AG04450 (cell line): ENCODE measurements at regions of chr14 and their contacts with region 1.

Region 1: DNA sequence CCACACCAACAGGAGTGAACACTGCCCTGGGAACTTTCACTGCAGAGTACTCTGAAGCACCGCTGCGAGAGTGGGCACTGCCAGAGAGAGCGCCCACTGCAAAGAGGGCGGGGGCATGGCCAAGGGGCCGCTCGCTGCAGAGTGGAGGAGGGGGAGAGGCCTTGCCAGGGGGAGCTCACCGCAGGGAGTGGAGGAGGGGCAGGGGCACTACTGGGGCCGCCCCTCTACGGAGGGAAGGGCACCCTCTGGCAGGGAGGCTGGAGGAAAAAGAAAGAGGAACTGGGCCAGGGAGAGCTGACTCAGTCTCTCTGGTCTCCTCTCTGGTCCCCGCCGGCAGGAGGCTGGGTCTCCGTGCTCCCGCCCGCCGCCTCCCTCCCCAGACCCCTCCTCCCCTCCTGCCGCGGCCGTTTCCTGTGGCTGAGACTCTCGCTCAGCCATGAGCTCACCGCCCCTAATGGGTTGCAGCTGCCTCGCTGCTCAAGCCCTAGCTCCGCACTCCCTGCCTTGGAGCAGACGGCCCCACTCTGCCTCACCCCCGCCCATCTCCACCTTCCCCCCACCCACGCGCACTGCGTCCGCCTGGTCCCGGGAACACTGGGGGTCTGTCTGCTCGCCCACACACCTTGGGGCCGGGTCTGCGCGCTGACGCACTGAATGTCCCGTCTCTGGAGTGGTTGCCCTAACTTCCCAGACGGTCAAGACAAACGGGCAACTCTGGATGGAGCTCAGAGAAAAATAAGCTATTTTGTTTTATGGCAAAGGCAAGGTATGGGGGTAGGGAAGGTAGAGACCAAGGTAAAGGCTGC is 1.3 kb downstream of the ARHGEF40 start:
- DNase-seq: peak; percentile 88
- H3K4me3 ChIP-seq: peak overlapping the region; percentile 82
- H3K27ac ChIP-seq: peak overlapping the region; percentile 95
- H3K27me3 ChIP-seq: no peaks in the 10 kb centered on the region
- CTCF ChIP-seq: no peak

Region 2: DNA sequence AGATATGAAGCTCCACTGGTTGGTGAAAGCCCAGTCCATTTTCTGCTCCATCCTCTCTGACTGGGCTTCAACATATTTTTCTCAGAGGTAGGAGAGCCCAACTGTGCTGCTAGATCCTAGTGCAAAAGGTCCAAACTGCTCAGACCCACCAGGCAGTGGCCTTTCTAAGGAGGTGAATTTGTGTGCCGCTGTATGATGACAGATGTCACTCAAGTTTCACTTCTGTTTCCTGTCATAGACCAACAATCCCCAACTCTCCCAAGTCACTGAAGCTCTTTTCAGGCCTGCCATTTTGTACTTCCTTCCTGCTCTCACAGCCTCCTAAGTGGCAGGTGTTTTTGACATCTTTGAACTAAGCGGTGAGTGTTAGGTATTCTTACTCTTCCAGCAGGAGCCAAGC is 403.5 kb before region 1 on chr14:
- CTCF ChIA-PET with region 1: no interaction called
- POLR2A ChIA-PET with region 1: no interaction called
- DNase-seq: no peak
- H3K4me3 ChIP-seq: no peak overlapping the region
- H3K27ac ChIP-seq: no peak overlapping the region
- H3K27me3 ChIP-seq: peaks cover 8% of the 10 kb centered on the region
- CTCF ChIP-seq: no peak

Region 3: GRCh38 chr14:21039585-21040369 is 31.7 kb before region 1 on chr14:
- CTCF ChIA-PET with region 1: interaction called, 10 read pairs
- POLR2A ChIA-PET with region 1: interaction called, 3 read pairs
- DNase-seq: peak; percentile 26
- H3K4me3 ChIP-seq: no peak overlapping the region
- H3K27ac ChIP-seq: no peak overlapping the region
- H3K27me3 ChIP-seq: peaks cover 28% of the 10 kb centered on the region
- CTCF ChIP-seq: peak; percentile 71

Region 4: GRCh38 chr14:21049271-21049673 is 22.2 kb before region 1 on chr14:
- CTCF ChIA-PET with region 1: interaction called, 6 read pairs
- POLR2A ChIA-PET with region 1: interaction called, 16 read pairs
- DNase-seq: no peak
- H3K4me3 ChIP-seq: no peak overlapping the region
- H3K27ac ChIP-seq: no peak overlapping the region
- H3K27me3 ChIP-seq: peaks cover 10% of the 10 kb centered on the region
- CTCF ChIP-seq: no peak

Region 5: DNA sequence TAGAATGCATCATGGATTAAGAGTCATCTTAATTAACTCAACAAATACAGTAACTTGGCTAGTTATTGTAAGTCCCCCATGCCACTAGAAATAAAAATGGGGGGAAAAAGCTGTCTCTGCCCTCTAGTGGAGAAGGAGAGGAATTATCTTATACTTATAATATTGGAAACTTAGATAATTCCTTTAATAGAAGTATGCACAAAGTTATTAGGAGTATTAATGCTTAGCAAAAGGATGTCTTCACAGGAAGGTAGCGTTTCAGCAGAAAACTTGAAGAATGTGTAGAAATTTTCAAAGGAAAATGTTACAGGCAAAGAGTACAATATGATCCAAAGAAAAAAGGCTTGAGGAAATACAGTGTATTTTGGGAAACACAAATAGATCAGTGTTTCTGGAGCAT is 64.6 kb after region 1 on chr14:
- CTCF ChIA-PET with region 1: interaction called, 12 read pairs
- POLR2A ChIA-PET with region 1: no interaction called
- DNase-seq: no peak
- H3K4me3 ChIP-seq: no peak overlapping the region
- H3K27ac ChIP-seq: no peak overlapping the region
- H3K27me3 ChIP-seq: peaks cover 2% of the 10 kb centered on the region
- CTCF ChIP-seq: peak; percentile 74

Region 6: DNA sequence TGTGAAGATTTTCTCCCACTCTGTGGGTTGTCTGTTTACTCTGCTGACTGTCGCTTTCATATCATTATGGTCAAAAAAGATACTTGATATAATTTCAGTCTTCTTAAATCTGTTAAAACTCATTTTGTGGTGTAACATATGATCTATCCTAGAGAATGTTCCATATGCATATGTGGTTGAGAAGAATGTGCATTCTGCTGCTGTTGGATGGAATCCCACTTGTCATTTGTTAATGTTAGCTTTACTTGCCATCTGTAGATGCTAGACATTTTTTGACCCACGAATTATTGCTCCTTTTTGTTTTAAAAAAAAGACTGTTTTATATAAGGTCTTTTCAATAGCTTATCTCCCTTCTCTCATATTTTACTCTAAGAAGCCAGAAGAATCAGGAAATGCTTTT is 110.7 kb after region 1 on chr14:
- CTCF ChIA-PET with region 1: no interaction called
- POLR2A ChIA-PET with region 1: no interaction called
- DNase-seq: no peak
- H3K4me3 ChIP-seq: no peak overlapping the region
- H3K27ac ChIP-seq: no peak overlapping the region
- H3K27me3 ChIP-seq: no peaks in the 10 kb centered on the region
- CTCF ChIP-seq: no peak